ENCODE measurements at regions of chr13 and their contacts with region 1.

Region 1: GRCh38 chr13:101757446-101758039 is 305.1 kb downstream of the ITGBL1 start:
- DNase-seq: no peak
- ATAC-seq: peak; percentile 70
- H3K4me3 ChIP-seq: no peak overlapping the region
- H3K4me1 ChIP-seq: no peaks in the 10 kb centered on the region
- CTCF ChIP-seq: no peak

Region 2: GRCh38 chr13:101514788-101515187 is 242.8 kb before region 1 on chr13:
- intact Hi-C with region 1: loop called in 1 of 2 experiments (anchors 10 kb)
- DNase-seq: peak in 1 of 3 donors; percentile 73
- ATAC-seq: peak; percentile 43
- H3K4me3 ChIP-seq: no peak overlapping the region
- H3K4me1 ChIP-seq: no peaks in the 10 kb centered on the region
- CTCF ChIP-seq: no peak

Region 3: GRCh38 chr13:101967781-101968180 is 210.2 kb after region 1 on chr13:
- intact Hi-C with region 1: no loop called
- DNase-seq: no peak
- ATAC-seq: no peak
- H3K4me3 ChIP-seq: no peak overlapping the region
- H3K4me1 ChIP-seq: no peaks in the 10 kb centered on the region
- CTCF ChIP-seq: no peak